Posterior vena cava (tissue), 2 donors: ENCODE measurements at regions of chr2 and their contacts with region 1.

Region 1: DNA sequence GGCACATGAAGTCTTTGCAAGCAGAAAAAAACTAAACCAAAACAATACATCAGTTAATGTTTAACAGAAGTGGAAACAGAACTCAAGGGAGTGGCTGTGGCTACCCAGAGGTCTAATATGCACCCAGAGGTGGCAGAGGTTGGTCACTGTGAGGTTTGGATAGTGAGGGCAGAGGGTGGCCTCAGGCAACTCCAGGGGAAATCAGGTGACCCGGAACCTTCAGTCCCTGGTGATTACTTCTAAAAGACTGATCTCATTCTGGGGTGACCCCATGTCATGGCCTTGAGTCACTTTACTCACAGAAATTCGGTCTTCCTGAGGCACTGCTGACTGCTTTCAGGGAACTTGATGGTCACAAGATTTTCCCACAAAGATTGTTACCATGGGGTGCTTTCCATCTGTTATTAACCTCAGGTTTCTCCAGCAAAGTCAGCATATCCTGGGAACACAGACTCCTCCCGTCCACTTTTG is 99.4 kb downstream of the TMEM17 start:
- DNase-seq: no peak

Region 2: DNA sequence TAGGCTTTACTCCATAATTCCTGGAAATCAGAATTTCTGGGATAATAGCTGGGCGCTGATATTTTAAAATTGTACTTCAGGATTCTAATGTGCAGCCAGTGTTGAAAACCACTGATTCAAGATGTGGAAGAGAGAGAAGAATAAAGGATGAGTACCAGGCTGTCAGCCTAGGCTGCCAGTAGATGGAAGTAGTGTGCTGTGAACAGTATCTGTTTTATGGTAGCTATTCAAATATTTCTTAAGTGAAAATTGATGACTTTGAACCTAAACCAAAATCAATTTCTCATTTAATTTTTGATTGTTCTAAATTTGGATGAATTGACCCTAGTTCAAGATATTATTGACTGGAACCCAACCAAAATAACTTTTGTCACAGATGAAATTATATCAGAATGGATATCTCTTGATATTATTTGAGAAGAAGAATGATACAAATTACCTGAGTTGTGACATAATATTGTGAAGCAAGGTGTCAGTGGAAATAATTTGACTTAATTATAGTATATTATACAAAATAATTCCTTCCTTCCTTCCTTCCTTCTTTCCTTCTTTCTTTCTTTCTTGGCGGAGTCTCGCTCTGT is 413.1 kb before region 1 on chr2:
- intact Hi-C with region 1: loop called in 1 of 2 experiments (anchors 10 kb)
- DNase-seq: no peak

Region 3: DNA sequence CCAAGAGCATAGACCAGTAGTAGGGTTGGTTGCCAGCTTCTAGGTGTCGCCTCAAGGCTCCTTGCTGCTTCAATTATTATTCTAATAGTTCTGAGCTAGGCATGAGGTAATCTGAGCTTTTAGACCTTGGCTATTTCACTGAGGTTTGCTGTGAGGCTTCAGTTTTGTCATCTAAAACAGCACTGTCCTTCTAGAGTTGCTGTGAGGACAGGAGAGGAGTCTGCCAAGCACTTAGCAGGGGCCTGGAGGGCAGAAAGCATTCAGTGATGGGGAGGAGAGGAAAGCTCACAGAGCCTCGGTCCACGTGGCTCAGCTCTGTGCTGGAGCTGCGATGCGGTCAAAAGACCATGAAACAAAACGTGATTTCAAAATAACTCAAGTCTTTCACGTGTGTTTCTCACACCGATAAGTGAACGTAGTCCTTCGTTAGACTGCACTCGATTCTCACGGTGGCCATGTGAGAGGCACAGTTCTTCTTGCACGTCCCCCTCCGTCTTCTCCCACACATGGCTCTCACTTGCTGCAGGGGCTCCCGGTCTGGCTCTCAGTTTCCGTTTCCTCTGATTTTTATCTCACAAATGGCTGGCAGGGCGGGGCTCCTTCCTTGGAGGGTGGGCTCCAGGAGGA is 97.0 kb before region 1 on chr2:
- intact Hi-C with region 1: loop called in 1 of 2 experiments (anchors 1 kb)
- DNase-seq: no peak

Region 4: DNA sequence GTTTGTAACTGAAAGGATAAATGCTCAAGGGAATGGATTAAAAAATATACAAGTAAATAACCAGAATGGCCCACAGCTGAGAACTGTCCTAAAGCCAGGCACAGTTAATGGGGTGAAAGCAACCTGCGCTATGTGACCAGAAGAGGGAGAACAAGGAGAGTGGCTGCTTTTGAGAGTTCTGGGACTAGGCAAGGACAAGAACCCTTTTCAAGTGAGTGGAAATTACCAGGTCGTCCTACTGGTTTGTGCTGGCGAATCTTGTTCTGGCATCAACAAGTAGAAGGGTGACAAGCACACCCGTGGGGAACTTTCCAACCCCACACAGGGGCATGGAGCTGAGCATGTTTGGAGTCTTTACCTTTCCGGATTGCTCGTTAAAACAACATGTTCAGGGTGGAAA is 16.6 kb after region 1 on chr2:
- intact Hi-C with region 1: no loop called
- DNase-seq: no peak